Head of caudate nucleus (tissue), 42 donors: ENCODE measurements at regions of chr11 and their contacts with region 1.

Region 1: GRCh38 chr11:101860696-101861427 is 53.9 kb upstream of the CEP126 start:
- DNase-seq: peak in 35 of 42 donors; percentile 2 to 78 (median 37)

Region 2: GRCh38 chr11:102010771-102011494 is 150.1 kb after region 1 on chr11:
- intact Hi-C with region 1: loop called (anchors 10 kb)
- DNase-seq: no peak